ENCODE measurements at regions of chr1 and their contacts with region 1.

Region 1: GRCh38 chr1:197976368-197976767 is 59.2 kb downstream of the LHX9 start:
- DNase-seq: peak; percentile 63
- H3K4me3 ChIP-seq: no peak overlapping the region
- H3K27ac ChIP-seq: no peak overlapping the region
- H3K4me1 ChIP-seq: no peaks in the 10 kb centered on the region
- H3K27me3 ChIP-seq: no peaks in the 10 kb centered on the region
- CTCF ChIP-seq: no peak

Region 2: DNA sequence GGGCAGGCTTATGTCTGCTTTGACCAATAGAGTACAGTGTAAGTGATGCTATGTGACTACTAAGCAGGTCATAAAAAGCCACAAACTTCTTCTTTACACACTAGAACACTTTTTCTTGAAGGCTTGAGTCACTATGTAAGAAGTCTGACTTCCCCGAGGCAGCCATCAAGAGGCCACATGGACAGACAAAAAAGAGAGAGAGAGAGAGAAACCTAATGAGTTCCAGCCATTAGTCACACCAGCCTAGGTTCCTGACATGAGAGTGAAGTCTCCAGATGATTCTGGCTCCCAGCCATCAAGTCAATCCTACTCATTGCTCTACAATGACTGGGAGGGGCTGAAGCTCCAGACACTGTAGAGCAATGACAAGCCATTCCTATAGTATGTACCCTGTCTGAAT is 42.2 kb after region 1 on chr1:
- CTCF ChIA-PET with region 1: interaction called, 16 read pairs
- dilution Hi-C with region 1: no loop called
- in situ Hi-C with region 1: no loop called
- intact Hi-C with region 1: no loop called
- DNase-seq: peak; percentile 99
- H3K4me3 ChIP-seq: no peak overlapping the region
- H3K27ac ChIP-seq: peak overlapping the region; percentile 45
- H3K4me1 ChIP-seq: peaks cover 13% of the 10 kb centered on the region
- H3K27me3 ChIP-seq: no peaks in the 10 kb centered on the region
- CTCF ChIP-seq: no peak

Region 3: GRCh38 chr1:198030682-198031081 is 54.3 kb after region 1 on chr1:
- CTCF ChIA-PET with region 1: no interaction called
- dilution Hi-C with region 1: no loop called
- in situ Hi-C with region 1: no loop called
- intact Hi-C with region 1: no loop called
- DNase-seq: no peak
- H3K4me3 ChIP-seq: no peak overlapping the region
- H3K27ac ChIP-seq: no peak overlapping the region
- H3K4me1 ChIP-seq: no peaks in the 10 kb centered on the region
- H3K27me3 ChIP-seq: no peaks in the 10 kb centered on the region
- CTCF ChIP-seq: no peak

Region 4: GRCh38 chr1:198047913-198048312 is 71.5 kb after region 1 on chr1:
- CTCF ChIA-PET with region 1: no interaction called
- dilution Hi-C with region 1: no loop called
- in situ Hi-C with region 1: no loop called
- intact Hi-C with region 1: no loop called
- DNase-seq: no peak
- H3K4me3 ChIP-seq: no peak overlapping the region
- H3K27ac ChIP-seq: no peak overlapping the region
- H3K4me1 ChIP-seq: no peaks in the 10 kb centered on the region
- H3K27me3 ChIP-seq: no peaks in the 10 kb centered on the region
- CTCF ChIP-seq: no peak

Region 5: DNA sequence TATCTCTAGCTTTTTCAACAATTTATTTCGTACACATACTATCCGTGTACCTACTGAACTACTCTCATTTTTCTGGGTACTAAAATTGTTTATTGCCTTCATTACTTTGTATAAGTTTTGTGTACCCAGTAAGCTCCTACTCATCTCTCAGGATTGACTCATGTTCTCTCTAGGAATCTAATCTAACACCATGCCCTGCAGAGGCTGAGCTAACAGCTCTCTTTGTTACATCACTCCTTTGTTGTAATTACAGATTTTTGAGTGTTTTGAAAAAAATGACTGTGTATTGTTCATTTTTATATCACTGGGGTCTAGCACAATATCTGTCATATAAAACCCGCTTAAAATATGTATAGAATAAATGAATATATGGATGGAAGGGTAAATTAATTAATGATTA is 397.0 kb after region 1 on chr1:
- CTCF ChIA-PET with region 1: no interaction called
- dilution Hi-C with region 1: no loop called
- in situ Hi-C with region 1: no loop called
- intact Hi-C with region 1: no loop called
- DNase-seq: peak; percentile 41
- H3K4me3 ChIP-seq: no peak overlapping the region
- H3K27ac ChIP-seq: no peak overlapping the region
- H3K4me1 ChIP-seq: no peaks in the 10 kb centered on the region
- H3K27me3 ChIP-seq: no peaks in the 10 kb centered on the region
- CTCF ChIP-seq: no peak

Measured in mammary epithelial cell (primary cell).